MCF 10A (cell line): ENCODE measurements at regions of chr15 and their contacts with region 1.

Region 1: GRCh38 chr15:45790325-45790943 is 155.6 kb downstream of the SQOR start:
- DNase-seq: peak; percentile 40
- H3K4me3 Mint-ChIP-seq: no peak overlapping the region
- H3K27ac Mint-ChIP-seq: no peak overlapping the region
- H3K4me1 Mint-ChIP-seq: peaks cover 5% of the 10 kb centered on the region
- H3K27me3 Mint-ChIP-seq: peaks cover 27% of the 10 kb centered on the region
- CTCF ChIP-seq: peak; percentile 44

Region 2: DNA sequence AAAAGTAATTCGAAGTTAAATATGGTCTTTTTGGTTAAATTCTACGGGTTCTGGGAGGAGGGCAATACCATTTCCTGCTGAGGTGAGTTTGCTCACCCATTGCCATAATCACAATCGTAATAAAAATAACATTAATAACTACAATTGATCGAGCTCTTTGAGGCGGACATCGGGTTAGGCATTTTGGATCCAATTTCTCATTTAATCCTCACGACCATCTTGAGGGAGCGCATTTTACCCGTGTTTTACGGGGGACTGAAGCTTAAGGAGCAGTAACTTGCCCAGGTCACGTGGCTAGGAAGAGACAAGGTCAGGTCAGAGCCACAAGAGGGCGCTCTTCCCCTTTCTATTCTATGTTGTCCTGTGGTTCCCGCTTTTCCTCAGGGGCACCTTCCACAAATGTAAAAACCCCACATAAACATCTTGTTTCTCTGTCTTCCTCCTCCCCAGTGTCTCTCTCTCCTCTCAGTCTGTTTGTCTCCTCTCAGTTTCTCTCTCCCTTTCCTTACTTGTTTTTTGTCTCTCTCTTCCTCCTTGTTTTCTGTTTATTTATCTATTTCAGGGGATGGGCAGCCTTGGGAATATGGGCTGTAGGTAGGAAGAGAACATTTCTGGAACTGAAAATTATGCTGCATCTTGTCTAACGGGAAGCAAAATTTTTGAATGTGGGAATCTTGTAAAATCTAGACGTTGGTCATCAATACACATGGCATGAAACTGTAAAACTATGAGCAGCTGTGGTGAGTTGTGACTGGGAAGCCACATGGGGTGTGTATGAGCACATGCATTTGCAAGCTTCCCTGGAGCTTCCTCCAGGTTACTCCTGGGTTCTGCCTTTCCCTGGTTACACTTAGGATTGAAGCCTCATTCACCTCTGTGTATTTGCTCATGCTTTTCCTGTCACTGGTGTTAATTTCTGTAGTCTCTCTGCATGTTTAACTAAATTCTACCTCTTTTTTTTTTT is 84.6 kb before region 1 on chr15:
- CTCF ChIA-PET with region 1: interaction called, 51 read pairs
- POLR2A ChIA-PET with region 1: interaction called, 4 read pairs
- intact Hi-C with region 1: no loop called
- DNase-seq: peak; percentile 86
- H3K4me3 Mint-ChIP-seq: peak overlapping the region; percentile 87
- H3K27ac Mint-ChIP-seq: peak overlapping the region; percentile 79
- H3K4me1 Mint-ChIP-seq: peaks cover 22% of the 10 kb centered on the region
- H3K27me3 Mint-ChIP-seq: no peaks in the 10 kb centered on the region
- CTCF ChIP-seq: peak; percentile 79

Region 3: DNA sequence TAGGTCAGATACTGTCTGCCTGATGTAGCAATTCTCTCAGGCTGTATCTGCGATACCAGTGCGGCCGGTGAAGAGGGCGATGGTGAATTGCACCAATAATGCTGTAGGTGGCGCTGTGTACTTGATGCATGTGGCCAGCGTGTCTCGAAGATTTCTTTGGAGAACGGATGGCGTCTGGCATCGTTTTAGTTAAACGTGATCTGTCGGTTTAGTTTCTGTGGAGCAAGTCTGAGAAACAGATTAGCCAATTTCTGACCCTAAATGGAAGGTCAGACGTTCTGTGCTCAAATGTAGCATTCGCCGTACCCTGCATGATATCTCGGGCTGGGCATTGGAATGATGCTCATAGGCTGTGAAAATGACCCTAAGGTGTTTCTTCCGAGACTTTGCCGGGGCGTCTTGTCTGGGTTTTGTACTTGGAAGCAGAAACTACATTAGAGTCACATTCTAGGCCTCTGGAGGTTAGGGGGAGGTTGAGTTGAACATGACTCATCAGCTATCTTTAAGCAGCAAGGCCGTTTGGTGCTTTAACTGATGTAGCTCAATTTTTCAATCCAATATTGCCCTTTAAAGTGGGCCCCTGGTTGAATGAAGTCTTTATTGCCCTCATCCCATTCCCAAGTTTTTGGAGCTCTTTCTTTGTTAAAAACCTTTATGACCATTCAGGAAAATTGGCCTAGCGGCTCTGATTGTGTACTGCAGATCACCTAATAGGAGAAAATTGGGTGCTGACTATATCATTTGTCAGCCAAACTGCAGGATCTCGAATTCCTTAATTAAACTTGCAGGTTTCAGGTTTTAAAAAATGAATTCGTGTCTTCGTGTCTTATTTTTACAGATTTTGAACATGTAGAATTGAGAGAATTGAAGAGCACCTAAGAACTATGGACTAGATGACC is 75.6 kb before region 1 on chr15:
- CTCF ChIA-PET with region 1: interaction called, 74 read pairs
- POLR2A ChIA-PET with region 1: no interaction called
- intact Hi-C with region 1: loop called (anchors 1 kb)
- DNase-seq: peak; percentile 75
- H3K4me3 Mint-ChIP-seq: no peak overlapping the region
- H3K27ac Mint-ChIP-seq: no peak overlapping the region
- H3K4me1 Mint-ChIP-seq: peaks cover 8% of the 10 kb centered on the region
- H3K27me3 Mint-ChIP-seq: peaks cover 24% of the 10 kb centered on the region
- CTCF ChIP-seq: peak; percentile 95

Region 4: GRCh38 chr15:45802140-45802539 is 11.7 kb after region 1 on chr15:
- CTCF ChIA-PET with region 1: interaction called, 38 read pairs
- POLR2A ChIA-PET with region 1: no interaction called
- intact Hi-C with region 1: no loop called
- DNase-seq: no peak
- H3K4me3 Mint-ChIP-seq: no peak overlapping the region
- H3K27ac Mint-ChIP-seq: no peak overlapping the region
- H3K4me1 Mint-ChIP-seq: no peaks in the 10 kb centered on the region
- H3K27me3 Mint-ChIP-seq: no peaks in the 10 kb centered on the region
- CTCF ChIP-seq: no peak